BJ (cell line): ENCODE measurements at regions of chr17 and their contacts with region 1.

Region 1: GRCh38 chr17:44344939-44345453 is at the start of gene GRN:
- DNase-seq: peak; percentile 96
- H3K4me3 ChIP-seq: peak within 1 kb of the TSS; percentile 87
- H3K27me3 ChIP-seq: no peaks in the 10 kb centered on the region
- CTCF ChIP-seq: no peak
- polyA plus RNA-seq, gene GRN: 213 and 581 TPM in 2 replicates

Region 2: GRCh38 chr17:44084131-44084544 is 260.9 kb before region 1 on chr17:
- CTCF ChIA-PET with region 1: no interaction called
- POLR2A ChIA-PET with region 1: no interaction called
- DNase-seq: no peak
- H3K4me3 ChIP-seq: no peak overlapping the region
- H3K27me3 ChIP-seq: no peaks in the 10 kb centered on the region
- CTCF ChIP-seq: peak; percentile 32; the same call in 1 of the 2 replicates

Region 3: GRCh38 chr17:44331249-44331760 is 13.7 kb before region 1 on chr17:
- CTCF ChIA-PET with region 1: interaction called, 28 read pairs
- POLR2A ChIA-PET with region 1: interaction called, 3 read pairs
- DNase-seq: peak; percentile 24
- H3K4me3 ChIP-seq: no peak overlapping the region
- H3K27me3 ChIP-seq: 0 out of 2 replicates have a peak, but pooled peaks cover 2% of the 10 kb centered on the region
- CTCF ChIP-seq: peak; percentile 80

Region 4: GRCh38 chr17:44438636-44439035 is 93.6 kb after region 1 on chr17:
- CTCF ChIA-PET with region 1: no interaction called
- POLR2A ChIA-PET with region 1: no interaction called
- DNase-seq: no peak
- H3K4me3 ChIP-seq: no peak overlapping the region
- H3K27me3 ChIP-seq: no peaks in the 10 kb centered on the region
- CTCF ChIP-seq: no peak